HEK293 (cell line): ENCODE measurements at regions of chr19 and their contacts with region 1.

Region 1: GRCh38 chr19:53792721-53793433 is 31.2 kb downstream of the NLRP12 start:
- H3K4me3 ChIP-seq: no peak overlapping the region
- H3K27ac ChIP-seq: no peak overlapping the region
- H3K4me1 ChIP-seq: no peaks in the 10 kb centered on the region
- CTCF ChIP-seq: peak; percentile 83

Region 2: DNA sequence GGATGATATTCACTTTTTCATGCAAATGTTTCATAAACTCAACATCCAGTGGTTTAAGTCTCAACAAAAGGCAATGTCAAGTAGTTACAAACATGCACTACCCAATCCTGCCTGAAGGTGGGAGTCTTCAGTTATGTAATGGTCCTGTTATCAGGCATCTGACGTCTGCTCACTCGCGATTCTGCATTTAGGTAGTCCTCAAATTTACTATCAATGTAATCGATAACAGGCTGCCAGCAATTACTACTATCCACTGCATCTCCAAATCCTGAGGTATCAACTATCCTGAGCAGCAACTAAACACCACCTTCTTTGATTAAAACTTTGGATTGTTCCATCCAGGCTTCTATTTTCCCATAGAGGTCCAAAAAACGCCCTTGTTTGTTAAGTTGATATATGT is 19.9 kb before region 1 on chr19:
- CTCF ChIA-PET with region 1: interaction called, 42 read pairs
- POLR2A ChIA-PET with region 1: interaction called, 5 read pairs
- H3K4me3 ChIP-seq: no peak overlapping the region
- H3K27ac ChIP-seq: no peak overlapping the region
- H3K4me1 ChIP-seq: no peaks in the 10 kb centered on the region
- CTCF ChIP-seq: peak; percentile 42; the same call in 1 of the 2 replicates

Region 3: GRCh38 chr19:53808710-53809125 is 15.8 kb after region 1 on chr19:
- CTCF ChIA-PET with region 1: interaction called, 25 read pairs
- POLR2A ChIA-PET with region 1: interaction called, 3 read pairs
- H3K4me3 ChIP-seq: no peak overlapping the region
- H3K27ac ChIP-seq: no peak overlapping the region
- H3K4me1 ChIP-seq: no peaks in the 10 kb centered on the region
- CTCF ChIP-seq: peak; percentile 38; the same call in 1 of the 2 replicates

Region 4: DNA sequence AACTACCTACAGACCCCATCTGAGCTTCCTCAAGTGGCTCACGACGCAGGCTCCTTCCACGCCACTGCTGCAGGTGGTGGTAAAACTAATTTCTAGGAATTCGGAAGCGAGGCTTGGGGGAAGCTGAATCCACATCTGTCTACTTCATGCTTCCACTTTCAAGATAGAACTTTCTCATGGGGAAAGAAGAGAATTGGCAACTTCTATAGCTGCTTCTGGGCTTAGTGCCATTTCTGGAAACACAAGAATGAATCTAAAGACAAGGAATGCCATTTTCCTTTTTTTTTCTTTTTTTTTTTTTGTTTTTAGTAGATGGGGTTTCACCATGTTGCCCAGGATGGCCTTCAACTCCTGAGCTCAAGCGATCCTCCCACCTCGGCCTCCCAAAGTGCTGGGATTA is 34.0 kb after region 1 on chr19:
- CTCF ChIA-PET with region 1: interaction called, 13 read pairs
- POLR2A ChIA-PET with region 1: no interaction called
- H3K4me3 ChIP-seq: no peak overlapping the region
- H3K27ac ChIP-seq: no peak overlapping the region
- H3K4me1 ChIP-seq: no peaks in the 10 kb centered on the region
- CTCF ChIP-seq: no peak

Region 5: GRCh38 chr19:53867225-53868090 is 74.6 kb after region 1 on chr19 and contains the start of gene MYADM:
- CTCF ChIA-PET with region 1: no interaction called
- POLR2A ChIA-PET with region 1: no interaction called
- H3K4me3 ChIP-seq: peak within 1 kb of the TSS; percentile 71
- H3K27ac ChIP-seq: peak within 1 kb of the TSS; percentile 28; the same call in 1 of the 2 replicates
- H3K4me1 ChIP-seq: peaks cover 15% of the 10 kb centered on the region
- CTCF ChIP-seq: no peak

Region 6: DNA sequence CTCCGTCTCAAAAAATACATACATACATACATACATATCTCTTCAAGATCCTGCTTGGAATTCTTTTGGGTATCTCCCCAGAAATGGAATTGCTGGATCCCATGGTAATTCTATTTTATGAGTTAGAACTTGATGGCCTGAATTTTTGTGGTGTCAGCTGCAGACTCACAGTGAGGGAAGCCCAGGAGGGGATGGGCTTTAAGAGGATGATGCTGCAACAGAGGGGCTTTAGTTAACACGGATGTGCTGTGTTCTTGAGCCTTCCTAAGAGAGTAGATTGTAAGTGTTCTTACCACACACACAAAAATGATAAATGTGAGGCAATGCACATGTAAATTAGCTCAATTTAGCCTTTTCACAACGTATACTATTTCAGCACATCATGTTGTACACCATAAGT is 230.3 kb after region 1 on chr19:
- CTCF ChIA-PET with region 1: interaction called, 33 read pairs
- POLR2A ChIA-PET with region 1: no interaction called
- H3K4me3 ChIP-seq: no peak overlapping the region
- H3K27ac ChIP-seq: no peak overlapping the region
- H3K4me1 ChIP-seq: no peaks in the 10 kb centered on the region
- CTCF ChIP-seq: no peak

Region 7: GRCh38 chr19:54129617-54129996 is 336.7 kb after region 1 on chr19:
- CTCF ChIA-PET with region 1: no interaction called
- POLR2A ChIA-PET with region 1: no interaction called
- H3K4me3 ChIP-seq: no peak overlapping the region
- H3K27ac ChIP-seq: no peak overlapping the region
- H3K4me1 ChIP-seq: no peaks in the 10 kb centered on the region
- CTCF ChIP-seq: no peak